ENCODE measurements at regions of chr1 and their contacts with region 1.

Region 1: GRCh38 chr1:44213222-44214112 is at the start of gene DMAP1:
- DNase-seq: peak; percentile 79 to 82
- H3K4me3 ChIP-seq: peak within 1 kb of the TSS; percentile 9 to 86 (median 57)
- H3K27ac ChIP-seq: peak within 1 kb of the TSS; percentile 19 to 83 (median 40)
- H3K4me1 ChIP-seq: peaks cover 11 to 14% of the 10 kb centered on the region in 2 donors
- H3K27me3 ChIP-seq: no peaks in the 10 kb centered on the region
- CTCF ChIP-seq: peak in 3 of 6 experiments; percentile 16 to 32 (median 28)
- POLR2A ChIP-seq: peak in 1 of 2 donors; percentile 46
- total RNA-seq, gene DMAP1: 43.9 to 68.8 (median 48.3) TPM

Region 2: GRCh38 chr1:44318097-44319088 is 104.9 kb after region 1 on chr1:
- intact Hi-C with region 1: loop called (anchors 10 kb)
- DNase-seq: peak; percentile 25 to 38
- H3K4me3 ChIP-seq: no peak overlapping the region
- H3K27ac ChIP-seq: no peak overlapping the region
- H3K4me1 ChIP-seq: peaks cover 0 to 10% of the 10 kb centered on the region in 2 donors
- H3K27me3 ChIP-seq: no peaks in the 10 kb centered on the region
- CTCF ChIP-seq: peak; percentile 49 to 79 (median 56)
- POLR2A ChIP-seq: no peak